ENCODE measurements at regions of chr11 and their contacts with region 1.

Region 1: GRCh38 chr11:77512092-77512491 is 38.2 kb upstream of the PAK1 start:
- DNase-seq: no peak
- H3K4me3 ChIP-seq: no peak overlapping the region
- H3K27ac ChIP-seq: no peak overlapping the region
- H3K4me1 ChIP-seq: peaks cover 24% of the 10 kb centered on the region
- H3K27me3 ChIP-seq: no peaks in the 10 kb centered on the region
- CTCF ChIP-seq: no peak

Region 2: GRCh38 chr11:77193166-77193565 is 318.9 kb before region 1 on chr11:
- CTCF ChIA-PET with region 1: no interaction called
- dilution Hi-C with region 1: no loop called
- in situ Hi-C with region 1: no loop called
- intact Hi-C with region 1: no loop called
- DNase-seq: no peak
- H3K4me3 ChIP-seq: no peak overlapping the region
- H3K27ac ChIP-seq: no peak overlapping the region
- H3K4me1 ChIP-seq: peaks cover 14% of the 10 kb centered on the region
- H3K27me3 ChIP-seq: no peaks in the 10 kb centered on the region
- CTCF ChIP-seq: no peak

Region 3: DNA sequence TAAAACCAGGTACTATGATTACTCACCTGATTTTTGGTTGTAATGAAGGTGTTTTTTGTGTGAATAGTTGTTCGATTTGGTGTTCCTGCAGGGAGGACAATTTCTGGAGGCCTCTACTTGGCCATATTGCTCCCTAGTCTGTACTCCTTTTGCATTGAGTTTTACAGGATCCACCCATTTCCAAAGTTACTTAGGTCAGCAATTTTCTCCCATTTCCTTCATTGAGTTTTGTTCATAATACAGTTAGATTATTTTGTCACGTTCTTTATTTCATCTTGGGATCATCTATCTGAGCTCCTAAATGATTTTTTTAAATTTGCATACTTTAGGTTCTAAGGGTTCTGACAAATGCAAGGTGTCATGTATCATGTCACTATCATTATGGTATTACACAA is 57.6 kb after region 1 on chr11:
- CTCF ChIA-PET with region 1: no interaction called
- dilution Hi-C with region 1: loop called (anchors 5 kb)
- in situ Hi-C with region 1: no loop called
- intact Hi-C with region 1: no loop called
- DNase-seq: no peak
- H3K4me3 ChIP-seq: no peak overlapping the region
- H3K27ac ChIP-seq: no peak overlapping the region
- H3K4me1 ChIP-seq: no peaks in the 10 kb centered on the region
- H3K27me3 ChIP-seq: no peaks in the 10 kb centered on the region
- CTCF ChIP-seq: no peak

Region 4: GRCh38 chr11:77589521-77590193 is 77.6 kb after region 1 on chr11 and contains the start of gene AQP11:
- CTCF ChIA-PET with region 1: no interaction called
- dilution Hi-C with region 1: no loop called
- in situ Hi-C with region 1: no loop called
- intact Hi-C with region 1: no loop called
- DNase-seq: peak; percentile 72
- H3K4me3 ChIP-seq: peak within 1 kb of the TSS; percentile 57 to 68 (median 59)
- H3K27ac ChIP-seq: no peak within 1 kb of the TSS
- H3K4me1 ChIP-seq: peaks cover 15% of the 10 kb centered on the region
- H3K27me3 ChIP-seq: no peaks in the 10 kb centered on the region
- CTCF ChIP-seq: no peak
- total RNA-seq, gene AQP11: 0.14 to 0.67 TPM